ENCODE measurements at regions of chr9 and their contacts with region 1.

Region 1: DNA sequence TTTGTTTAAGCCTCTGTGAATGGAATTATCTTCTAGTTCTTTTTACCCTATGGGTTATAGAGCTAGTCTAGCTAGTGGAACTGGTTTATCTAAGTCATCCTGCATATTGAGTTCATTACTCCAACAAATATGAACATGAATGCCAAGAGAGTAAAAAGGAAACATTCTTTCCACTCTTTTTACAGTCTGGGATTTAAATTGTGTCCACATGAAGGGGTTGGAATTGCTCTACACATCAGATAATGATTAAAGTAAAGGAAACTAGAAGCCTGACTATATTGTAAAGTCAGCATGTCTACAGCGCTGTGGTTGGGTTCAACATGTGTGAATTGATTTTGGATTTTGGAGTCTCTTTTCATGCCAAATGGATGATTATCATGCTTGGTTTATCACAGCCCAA is 173.1 kb downstream of the CCDC171 start:
- DNase-seq: no peak
- ATAC-seq: no peak
- H3K4me3 ChIP-seq: no peak overlapping the region
- H3K4me3 Mint-ChIP-seq: no peak overlapping the region
- H3K27ac ChIP-seq: no peak overlapping the region
- H3K27ac Mint-ChIP-seq: no peak overlapping the region
- H3K4me1 ChIP-seq: peaks cover 0 to 5% of the 10 kb centered on the region in 2 experiments
- H3K4me1 Mint-ChIP-seq: peaks cover 3 to 5% (median 4%) of the 10 kb centered on the region in 3 donors
- H3K27me3 ChIP-seq: no peaks in the 10 kb centered on the region
- H3K27me3 Mint-ChIP-seq: no peaks in the 10 kb centered on the region

Region 2: GRCh38 chr9:15403155-15403554 is 322.8 kb before region 1 on chr9:
- CTCF ChIA-PET with region 1: no interaction called
- POLR2A ChIA-PET with region 1: interaction called in 1 of 2 experiments, 13 read pairs
- DNase-seq: peak in 4 of 35 experiments; percentile 1 to 37 (median 9)
- ATAC-seq: peak in 1 of 4 experiments; percentile 43
- H3K4me3 ChIP-seq: no peak overlapping the region
- H3K4me3 Mint-ChIP-seq: no peak overlapping the region
- H3K27ac ChIP-seq: no peak overlapping the region
- H3K27ac Mint-ChIP-seq: no peak overlapping the region
- H3K4me1 ChIP-seq: no peaks in the 10 kb centered on the region
- H3K4me1 Mint-ChIP-seq: no peaks in the 10 kb centered on the region
- H3K27me3 ChIP-seq: no peaks in the 10 kb centered on the region
- H3K27me3 Mint-ChIP-seq: no peaks in the 10 kb centered on the region

Region 3: GRCh38 chr9:15543047-15543813 is 182.7 kb before region 1 on chr9:
- CTCF ChIA-PET with region 1: no interaction called
- POLR2A ChIA-PET with region 1: no interaction called
- DNase-seq: no peak
- ATAC-seq: no peak
- H3K4me3 ChIP-seq: no peak overlapping the region
- H3K4me3 Mint-ChIP-seq: no peak overlapping the region
- H3K27ac ChIP-seq: no peak overlapping the region
- H3K27ac Mint-ChIP-seq: no peak overlapping the region
- H3K4me1 ChIP-seq: no peaks in the 10 kb centered on the region
- H3K4me1 Mint-ChIP-seq: no peaks in the 10 kb centered on the region
- H3K27me3 ChIP-seq: peaks cover 0 to 2% of the 10 kb centered on the region in 2 experiments
- H3K27me3 Mint-ChIP-seq: peaks cover 3 to 4% of the 10 kb centered on the region in 2 donors

Measured in T-cell (primary cell).